ENCODE measurements at regions of chr1 and their contacts with region 1.

Region 1: DNA sequence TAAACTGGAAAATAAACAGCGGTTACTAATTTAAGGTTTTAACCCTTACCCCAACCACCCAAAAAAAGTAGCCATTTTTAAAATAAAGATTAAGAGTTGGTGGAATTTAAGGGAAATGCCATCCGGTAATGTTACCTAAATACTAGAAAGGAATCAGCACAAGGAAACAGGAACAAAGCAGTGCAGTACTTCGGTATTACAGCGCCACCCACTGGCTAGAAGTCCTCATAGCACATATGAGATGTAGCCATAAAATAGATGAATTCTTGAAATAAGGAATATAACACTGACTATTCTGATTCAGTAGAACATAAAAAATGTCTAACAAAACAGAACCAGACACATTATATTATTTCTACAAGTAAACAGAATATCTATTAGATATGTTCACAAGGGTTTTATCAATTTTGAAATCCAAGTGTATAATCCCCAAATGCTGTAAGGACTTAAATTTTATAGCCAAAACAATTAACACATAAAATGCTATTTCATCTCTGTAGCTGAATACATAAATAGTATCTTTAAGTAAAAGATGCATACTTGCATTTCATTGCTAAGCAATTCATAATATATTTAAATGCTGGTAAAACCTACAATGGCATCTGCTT is 58.8 kb downstream of the FRRS1 start:
- DNase-seq: peak; percentile 59 to 81 (median 72)
- H3K4me3 ChIP-seq: no peak overlapping the region
- H3K4me3 Mint-ChIP-seq: no peak overlapping the region
- H3K27ac ChIP-seq: no peak overlapping the region
- H3K27ac Mint-ChIP-seq: no peak overlapping the region
- H3K4me1 ChIP-seq: peaks cover 12 to 21% of the 10 kb centered on the region in 2 donors
- H3K4me1 Mint-ChIP-seq: peaks cover 23% of the 10 kb centered on the region
- H3K27me3 ChIP-seq: no peaks in the 10 kb centered on the region
- H3K27me3 Mint-ChIP-seq: no peaks in the 10 kb centered on the region
- CTCF ChIP-seq: peak; percentile 93

Region 2: GRCh38 chr1:98754176-98754575 is 953.5 kb before region 1 on chr1:
- intact Hi-C with region 1: loop called in 1 of 2 experiments (anchors 5 kb)
- DNase-seq: no peak
- H3K4me3 ChIP-seq: no peak overlapping the region
- H3K4me3 Mint-ChIP-seq: no peak overlapping the region
- H3K27ac ChIP-seq: no peak overlapping the region
- H3K27ac Mint-ChIP-seq: no peak overlapping the region
- H3K4me1 ChIP-seq: no peaks in the 10 kb centered on the region
- H3K4me1 Mint-ChIP-seq: no peaks in the 10 kb centered on the region
- H3K27me3 ChIP-seq: no peaks in the 10 kb centered on the region
- H3K27me3 Mint-ChIP-seq: no peaks in the 10 kb centered on the region
- CTCF ChIP-seq: no peak

Region 3: GRCh38 chr1:99180343-99180808 is 527.3 kb before region 1 on chr1:
- intact Hi-C with region 1: loop called (anchors 5 kb)
- DNase-seq: peak; percentile 31 to 70 (median 55)
- H3K4me3 ChIP-seq: no peak overlapping the region
- H3K4me3 Mint-ChIP-seq: no peak overlapping the region
- H3K27ac ChIP-seq: no peak overlapping the region
- H3K27ac Mint-ChIP-seq: no peak overlapping the region
- H3K4me1 ChIP-seq: no peaks in the 10 kb centered on the region
- H3K4me1 Mint-ChIP-seq: no peaks in the 10 kb centered on the region
- H3K27me3 ChIP-seq: no peaks in the 10 kb centered on the region
- H3K27me3 Mint-ChIP-seq: peaks cover 0 to 4% (median 0%) of the 10 kb centered on the region in 3 donors
- CTCF ChIP-seq: peak; percentile 87